ENCODE measurements at regions of chr12 and their contacts with region 1.

Region 1: DNA sequence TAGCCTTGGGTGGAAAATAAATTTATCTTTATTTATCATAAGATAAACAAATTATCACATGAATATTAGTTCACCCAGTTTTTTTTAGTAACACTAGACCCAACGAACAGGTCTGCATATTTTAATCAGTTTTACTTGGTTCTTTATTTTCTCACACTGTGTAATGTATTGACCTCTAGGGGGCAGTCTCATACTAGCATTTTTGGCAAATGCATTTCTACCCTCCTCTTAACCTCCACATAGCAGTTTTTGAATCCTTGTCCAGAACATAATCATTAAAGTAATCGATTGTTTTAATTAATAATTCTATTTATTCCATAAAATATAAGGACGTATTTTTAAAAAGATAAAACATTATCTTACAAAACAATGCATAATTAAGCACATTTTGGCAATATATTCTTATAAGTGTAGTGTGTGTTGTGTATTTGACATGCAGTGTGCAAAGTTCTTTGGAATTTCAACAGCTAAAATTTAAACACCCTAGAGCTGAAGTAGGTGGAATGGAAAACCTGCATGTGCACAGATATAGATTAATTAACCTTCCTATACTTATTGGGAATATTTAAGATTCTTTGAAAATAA is 31.6 kb upstream of the PTPRQ start:
- DNase-seq: no peak
- ATAC-seq: peak; percentile 56 to 70
- H3K4me3 ChIP-seq: no peak overlapping the region
- H3K27ac ChIP-seq: no peak overlapping the region
- H3K4me1 ChIP-seq: no peaks in the 10 kb centered on the region
- H3K27me3 ChIP-seq: no peaks in the 10 kb centered on the region
- CTCF ChIP-seq: peak; percentile 52 to 78 (median 64)
- POLR2A ChIP-seq: no peak

Region 2: DNA sequence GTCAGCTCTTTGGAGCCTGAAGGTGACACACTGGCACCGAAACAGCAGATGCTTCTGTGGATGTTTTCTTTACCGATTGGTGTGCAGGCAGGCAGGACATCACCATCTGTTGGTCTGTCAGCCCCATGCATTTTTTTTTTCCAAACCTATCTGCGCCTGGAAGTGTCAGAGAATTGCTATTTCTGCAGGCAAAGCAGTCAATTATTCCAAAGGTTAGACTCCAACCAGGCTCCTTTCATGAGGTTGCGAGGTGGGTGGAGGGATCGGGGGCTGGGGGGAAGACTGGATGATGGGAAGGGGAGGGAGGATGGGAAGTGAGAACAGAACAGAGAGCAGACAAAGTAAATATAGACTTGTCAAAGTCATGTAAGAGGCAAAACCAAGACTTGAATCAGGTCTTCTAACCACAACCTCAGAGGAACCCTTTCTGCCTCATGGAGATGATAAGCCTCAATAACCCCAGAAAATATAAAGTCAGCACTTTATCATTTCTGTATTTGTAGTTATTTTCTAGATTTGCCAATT is 195.4 kb before region 1 on chr12:
- in situ Hi-C with region 1: no loop called
- intact Hi-C with region 1: no loop called
- DNase-seq: no peak
- ATAC-seq: no peak
- H3K4me3 ChIP-seq: no peak overlapping the region
- H3K27ac ChIP-seq: no peak overlapping the region
- H3K4me1 ChIP-seq: no peaks in the 10 kb centered on the region
- H3K27me3 ChIP-seq: no peaks in the 10 kb centered on the region
- CTCF ChIP-seq: no peak
- POLR2A ChIP-seq: no peak

Region 3: DNA sequence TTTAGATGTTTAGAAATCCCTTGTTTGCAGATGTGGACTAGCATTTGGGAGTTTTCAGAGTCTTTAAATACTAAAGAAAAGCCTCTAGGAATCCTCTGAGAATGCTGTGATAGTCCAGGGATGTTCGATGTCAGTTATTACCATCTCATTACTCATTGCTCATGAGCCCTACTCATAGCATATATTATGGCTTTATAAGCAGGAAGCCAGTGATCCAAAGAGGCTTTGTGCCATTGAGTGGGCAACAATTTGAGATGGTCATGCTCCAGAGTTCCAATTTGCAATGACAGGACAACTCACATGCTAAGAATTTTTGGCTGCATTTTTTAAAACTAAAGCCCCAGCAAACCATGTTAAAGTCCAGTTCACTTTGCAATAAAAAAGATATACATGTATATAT is 150.1 kb before region 1 on chr12:
- in situ Hi-C with region 1: no loop called
- intact Hi-C with region 1: no loop called
- DNase-seq: no peak
- ATAC-seq: no peak
- H3K4me3 ChIP-seq: no peak overlapping the region
- H3K27ac ChIP-seq: no peak overlapping the region
- H3K4me1 ChIP-seq: no peaks in the 10 kb centered on the region
- H3K27me3 ChIP-seq: no peaks in the 10 kb centered on the region
- CTCF ChIP-seq: no peak
- POLR2A ChIP-seq: no peak

Region 4: DNA sequence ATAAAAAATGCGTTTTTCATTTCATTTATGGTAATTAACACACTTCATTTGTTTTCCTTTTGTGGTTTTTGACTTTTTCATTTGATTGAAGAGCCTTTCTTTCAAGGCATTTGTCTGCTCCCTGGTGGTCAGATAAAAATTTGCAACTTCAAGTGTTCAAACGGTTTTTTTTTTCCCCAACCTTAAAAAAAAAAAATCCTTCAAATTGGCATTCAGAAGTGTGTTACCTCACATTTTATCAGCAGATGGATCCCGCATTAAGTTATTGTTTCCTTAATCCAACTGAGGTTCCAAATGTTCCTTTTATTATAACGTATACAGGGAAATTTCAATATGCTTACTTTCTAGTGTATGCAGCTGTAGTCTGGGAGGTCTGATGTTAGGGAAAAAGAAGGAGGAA is 351.4 kb after region 1 on chr12:
- in situ Hi-C with region 1: loop called (anchors 5 to 25 kb)
- intact Hi-C with region 1: loop called (anchors 2 kb)
- DNase-seq: no peak
- ATAC-seq: peak; percentile 33 to 57
- H3K4me3 ChIP-seq: no peak overlapping the region
- H3K27ac ChIP-seq: no peak overlapping the region
- H3K4me1 ChIP-seq: no peaks in the 10 kb centered on the region
- H3K27me3 ChIP-seq: no peaks in the 10 kb centered on the region
- CTCF ChIP-seq: peak; percentile 49 to 72 (median 58)
- POLR2A ChIP-seq: no peak

Region 5: GRCh38 chr12:80977356-80977755 is 564.9 kb after region 1 on chr12:
- in situ Hi-C with region 1: no loop called
- intact Hi-C with region 1: no loop called
- DNase-seq: no peak
- ATAC-seq: no peak
- H3K4me3 ChIP-seq: no peak overlapping the region
- H3K27ac ChIP-seq: no peak overlapping the region
- H3K4me1 ChIP-seq: no peaks in the 10 kb centered on the region
- H3K27me3 ChIP-seq: no peaks in the 10 kb centered on the region
- CTCF ChIP-seq: no peak
- POLR2A ChIP-seq: no peak

Region 6: DNA sequence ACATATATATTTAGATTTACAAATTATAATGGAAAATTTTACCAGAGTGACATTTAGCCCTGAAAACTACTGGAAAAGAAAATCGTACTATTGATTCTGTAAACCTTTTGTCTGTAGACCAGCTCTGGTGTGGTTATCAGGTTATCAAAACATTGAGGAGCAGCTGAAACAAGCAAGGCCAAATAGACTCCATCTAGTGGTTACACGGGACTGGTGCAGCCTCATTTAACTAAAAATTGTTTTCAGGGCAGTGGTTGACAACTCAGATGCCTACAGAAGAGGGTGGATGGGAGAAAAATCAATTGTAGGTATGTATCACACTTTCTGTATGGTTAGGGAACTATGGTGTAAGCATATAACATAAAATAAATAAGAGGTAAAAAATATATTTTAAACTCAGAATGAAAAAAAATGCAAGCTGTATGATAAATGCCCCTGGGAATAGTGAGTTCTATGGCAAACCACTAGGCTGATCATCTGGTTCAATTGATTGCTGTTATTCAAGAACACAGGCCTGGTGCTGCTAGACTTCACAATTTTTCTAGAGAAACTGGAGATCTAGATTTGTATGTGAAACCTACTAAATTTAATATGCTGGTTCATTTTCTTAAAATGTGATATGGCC is 716.6 kb after region 1 on chr12:
- in situ Hi-C with region 1: no loop called
- intact Hi-C with region 1: loop called (anchors 10 kb)
- DNase-seq: peak in 1 of 2 donors; percentile 22
- ATAC-seq: peak in 1 of 2 donors; percentile 81
- H3K4me3 ChIP-seq: no peak overlapping the region
- H3K27ac ChIP-seq: no peak overlapping the region
- H3K4me1 ChIP-seq: no peaks in the 10 kb centered on the region
- H3K27me3 ChIP-seq: no peaks in the 10 kb centered on the region
- CTCF ChIP-seq: peak; percentile 45 to 75 (median 68)
- POLR2A ChIP-seq: no peak

Region 7: GRCh38 chr12:81257947-81258551 is 845.6 kb after region 1 on chr12:
- in situ Hi-C with region 1: loop called in 1 of 4 experiments (anchors 25 kb)
- intact Hi-C with region 1: no loop called
- DNase-seq: no peak
- ATAC-seq: no peak
- H3K4me3 ChIP-seq: no peak overlapping the region
- H3K27ac ChIP-seq: no peak overlapping the region
- H3K4me1 ChIP-seq: no peaks in the 10 kb centered on the region
- H3K27me3 ChIP-seq: no peaks in the 10 kb centered on the region
- CTCF ChIP-seq: peak in 2 of 5 experiments; percentile 9 to 21
- POLR2A ChIP-seq: no peak